ENCODE measurements at regions of chr2 and their contacts with region 1.

Region 1: GRCh38 chr2:8681786-8682692 is at the start of gene ID2:
- DNase-seq: peak; percentile 99 to 100
- H3K4me3 ChIP-seq: peak within 1 kb of the TSS; percentile 82 to 89
- H3K27ac ChIP-seq: peak within 1 kb of the TSS; percentile 99 to 100
- H3K4me1 ChIP-seq: peaks cover 0 to 10% of the 10 kb centered on the region in 2 donors
- H3K27me3 ChIP-seq: no peaks in the 10 kb centered on the region
- CTCF ChIP-seq: no peak
- total RNA-seq, gene ID2: 752 TPM

Region 2: DNA sequence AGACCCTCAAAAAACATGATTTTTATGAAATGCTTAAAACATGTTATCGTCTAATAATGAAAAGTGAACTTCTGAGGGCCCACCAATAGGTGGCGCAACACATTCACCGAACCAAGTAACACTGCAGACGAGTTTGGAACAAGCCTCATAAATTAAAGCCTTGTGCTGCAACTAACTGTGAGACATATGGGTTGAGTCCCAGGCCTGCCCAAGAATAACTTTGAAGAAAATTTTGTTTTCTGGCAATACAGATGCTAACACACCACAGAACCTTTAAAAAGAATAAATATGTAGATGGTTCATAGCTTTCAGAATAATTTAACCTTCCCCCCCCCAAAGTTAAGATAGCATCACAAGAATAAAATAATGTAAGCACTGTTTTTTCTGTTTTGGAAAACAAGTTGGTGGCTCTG is 1479.0 kb before region 1 on chr2:
- intact Hi-C with region 1: loop called (anchors 5 kb)
- DNase-seq: no peak
- H3K4me3 ChIP-seq: no peak overlapping the region
- H3K27ac ChIP-seq: no peak overlapping the region
- H3K4me1 ChIP-seq: no peaks in the 10 kb centered on the region
- H3K27me3 ChIP-seq: no peaks in the 10 kb centered on the region
- CTCF ChIP-seq: peak; percentile 60 to 89 (median 85)

Region 3: GRCh38 chr2:7950035-7950612 is 731.9 kb before region 1 on chr2:
- intact Hi-C with region 1: loop called (anchors 2 kb)
- DNase-seq: peak in 1 of 2 donors; percentile 75
- H3K4me3 ChIP-seq: no peak overlapping the region
- H3K27ac ChIP-seq: peak overlapping the region; percentile 73 to 77
- H3K4me1 ChIP-seq: peaks cover 0 to 15% of the 10 kb centered on the region in 2 donors
- H3K27me3 ChIP-seq: no peaks in the 10 kb centered on the region
- CTCF ChIP-seq: no peak

Region 4: DNA sequence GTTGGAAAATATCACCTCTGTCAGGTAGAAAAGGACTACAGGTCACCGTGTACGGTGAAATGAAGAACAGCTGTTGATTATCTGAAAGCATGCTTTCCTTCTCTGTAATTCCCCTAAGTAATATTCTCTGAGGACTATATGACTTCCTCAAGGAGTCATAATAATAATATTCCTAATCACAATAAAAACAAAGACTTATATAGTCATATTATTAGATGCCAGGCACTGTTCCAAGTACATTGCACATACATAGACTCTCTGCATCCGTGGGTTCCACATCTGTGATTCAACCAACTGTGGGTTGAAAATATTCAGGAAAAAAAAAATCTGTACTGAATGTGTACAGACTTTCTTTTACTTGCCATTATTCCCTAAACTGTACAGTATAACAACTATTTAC is 512.6 kb before region 1 on chr2:
- intact Hi-C with region 1: loop called (anchors 2 kb)
- DNase-seq: no peak
- H3K4me3 ChIP-seq: no peak overlapping the region
- H3K27ac ChIP-seq: peak overlapping the region; percentile 28 to 63
- H3K4me1 ChIP-seq: peaks cover 0 to 7% of the 10 kb centered on the region in 2 donors
- H3K27me3 ChIP-seq: no peaks in the 10 kb centered on the region
- CTCF ChIP-seq: no peak

Region 5: DNA sequence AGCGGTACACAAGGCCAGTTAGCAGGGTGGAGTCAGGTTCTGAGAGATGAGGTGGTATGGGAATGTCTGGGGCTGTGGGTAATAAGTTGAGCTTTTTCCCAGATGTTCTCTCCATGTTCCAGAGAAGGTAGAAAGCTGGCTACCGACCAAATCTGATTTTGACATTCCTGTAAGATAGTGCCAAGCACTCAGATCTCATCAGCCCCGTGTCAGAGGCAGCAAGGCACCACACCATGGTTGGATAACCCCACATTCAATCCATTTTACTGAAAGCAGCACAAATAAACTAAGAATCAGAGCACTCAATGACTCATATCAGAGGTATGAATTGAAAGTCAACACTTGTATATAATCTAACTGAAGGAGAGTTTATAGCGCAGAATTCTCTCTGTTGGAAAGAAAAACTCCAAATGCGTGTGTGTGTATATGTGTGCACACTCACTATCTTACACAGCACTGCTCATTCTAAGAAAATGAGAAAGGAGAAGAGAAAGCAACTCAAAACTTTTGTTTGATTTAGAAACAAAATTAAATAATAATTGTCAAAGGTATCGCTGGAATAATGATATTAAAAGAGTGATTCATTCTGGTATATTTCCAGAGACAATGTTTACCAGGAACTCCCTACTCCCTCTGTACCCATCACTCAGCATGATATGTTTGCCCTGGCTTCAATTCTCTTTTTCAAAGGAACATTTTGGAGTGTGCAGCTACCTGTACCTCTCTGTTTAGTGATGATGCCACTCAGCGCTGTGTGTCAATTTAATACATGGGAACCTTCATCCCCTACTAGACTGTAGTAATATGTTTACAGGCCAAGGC is 375.3 kb before region 1 on chr2:
- intact Hi-C with region 1: loop called (anchors 5 kb)
- DNase-seq: peak in 1 of 2 donors; percentile 42
- H3K4me3 ChIP-seq: no peak overlapping the region
- H3K27ac ChIP-seq: peak overlapping the region; percentile 69 to 82
- H3K4me1 ChIP-seq: peaks cover 0 to 24% of the 10 kb centered on the region in 2 donors
- H3K27me3 ChIP-seq: no peaks in the 10 kb centered on the region
- CTCF ChIP-seq: no peak

Region 6: GRCh38 chr2:8644605-8645175 is 37.3 kb before region 1 on chr2:
- intact Hi-C with region 1: no loop called
- DNase-seq: no peak
- H3K4me3 ChIP-seq: no peak overlapping the region
- H3K27ac ChIP-seq: no peak overlapping the region
- H3K4me1 ChIP-seq: no peaks in the 10 kb centered on the region
- H3K27me3 ChIP-seq: no peaks in the 10 kb centered on the region
- CTCF ChIP-seq: peak in 1 of 3 experiments; percentile 38

Region 7: DNA sequence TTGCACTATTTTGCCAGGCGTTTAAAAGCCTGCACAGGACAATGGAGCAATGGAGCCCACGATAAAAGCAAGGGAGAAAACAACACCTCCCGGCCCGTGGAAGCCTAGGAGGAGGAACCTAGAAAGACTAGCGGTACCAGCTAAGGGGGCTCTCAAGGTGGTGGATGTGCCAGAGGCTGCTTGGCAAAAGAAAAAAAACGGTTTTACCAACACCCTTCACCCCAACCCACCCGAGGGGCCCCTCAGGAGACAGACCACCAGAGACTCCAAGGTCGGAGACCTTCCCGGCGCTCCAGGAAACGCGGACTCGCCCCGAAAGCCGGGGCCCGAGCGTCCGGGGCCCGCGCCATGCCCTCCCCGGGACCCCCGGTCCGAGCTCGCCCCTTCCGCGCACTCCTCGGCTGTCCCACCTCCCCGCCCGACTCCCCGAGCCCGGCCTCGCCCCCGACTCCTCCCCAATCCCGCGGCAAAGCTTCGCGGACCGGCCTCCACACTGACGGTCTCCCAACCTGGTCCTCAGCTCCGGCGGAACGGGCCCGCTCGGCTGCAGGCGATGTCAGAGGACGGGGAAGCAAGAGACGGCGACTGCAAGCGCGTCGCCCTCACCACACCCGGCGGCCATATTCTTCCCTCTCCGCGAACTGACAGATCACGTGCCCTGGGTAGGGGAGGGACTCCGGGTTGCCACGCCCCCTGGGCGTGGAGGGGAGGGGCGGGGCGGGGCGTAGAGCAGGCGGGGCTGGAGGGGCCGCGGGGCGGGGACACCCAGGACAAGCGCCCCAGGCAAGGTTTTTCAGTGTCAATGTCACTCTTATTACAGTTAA is 155.1 kb after region 1 on chr2 and contains the start of gene KIDINS220:
- intact Hi-C with region 1: loop called (anchors 5 kb)
- DNase-seq: peak; percentile 42 to 91
- H3K4me3 ChIP-seq: peak within 1 kb of the TSS; percentile 74 to 97
- H3K27ac ChIP-seq: peak within 1 kb of the TSS; percentile 68 to 79
- H3K4me1 ChIP-seq: peaks cover 8 to 21% of the 10 kb centered on the region in 2 donors
- H3K27me3 ChIP-seq: no peaks in the 10 kb centered on the region
- CTCF ChIP-seq: no peak
- total RNA-seq, gene KIDINS220: 59.1 TPM

Region 8: GRCh38 chr2:9021563-9022211 is 339.6 kb after region 1 on chr2:
- intact Hi-C with region 1: no loop called
- DNase-seq: no peak
- H3K4me3 ChIP-seq: no peak overlapping the region
- H3K27ac ChIP-seq: no peak overlapping the region
- H3K4me1 ChIP-seq: no peaks in the 10 kb centered on the region
- H3K27me3 ChIP-seq: no peaks in the 10 kb centered on the region
- CTCF ChIP-seq: no peak

Region 9: GRCh38 chr2:10254373-10255151 is 1572.5 kb after region 1 on chr2:
- intact Hi-C with region 1: no loop called
- DNase-seq: no peak
- H3K4me3 ChIP-seq: no peak overlapping the region
- H3K27ac ChIP-seq: no peak overlapping the region
- H3K4me1 ChIP-seq: no peaks in the 10 kb centered on the region
- H3K27me3 ChIP-seq: no peaks in the 10 kb centered on the region
- CTCF ChIP-seq: no peak

Measured in ascending aorta (tissue), 2 donors.